Caco-2 (cell line): ENCODE measurements at regions of chr7 and their contacts with region 1.

Region 1: GRCh38 chr7:16918288-16918895 is 36.6 kb upstream of the AGR3 start:
- DNase-seq: peak in 1 of 2 experiments; percentile 52
- H3K4me3 ChIP-seq: no peak overlapping the region
- H3K4me3 Mint-ChIP-seq: no peak overlapping the region
- H3K27ac Mint-ChIP-seq: peak overlapping the region; percentile 50
- H3K4me1 ChIP-seq: peaks cover 51% of the 10 kb centered on the region
- H3K4me1 Mint-ChIP-seq: peaks cover 38% of the 10 kb centered on the region
- H3K27me3 ChIP-seq: no peaks in the 10 kb centered on the region
- H3K27me3 Mint-ChIP-seq: no peaks in the 10 kb centered on the region
- CTCF ChIP-seq: peak; percentile 58 to 82

Region 2: GRCh38 chr7:16695621-16696237 is 222.7 kb before region 1 on chr7:
- CTCF ChIA-PET with region 1: interaction called, 5 read pairs
- POLR2A ChIA-PET with region 1: no interaction called
- intact Hi-C with region 1: loop called (anchors 2 kb)
- DNase-seq: peak; percentile 54 to 67
- H3K4me3 ChIP-seq: no peak overlapping the region
- H3K4me3 Mint-ChIP-seq: no peak overlapping the region
- H3K27ac Mint-ChIP-seq: no peak overlapping the region
- H3K4me1 ChIP-seq: no peaks in the 10 kb centered on the region
- H3K4me1 Mint-ChIP-seq: no peaks in the 10 kb centered on the region
- H3K27me3 ChIP-seq: no peaks in the 10 kb centered on the region
- H3K27me3 Mint-ChIP-seq: no peaks in the 10 kb centered on the region
- CTCF ChIP-seq: peak; percentile 68 to 71

Region 3: GRCh38 chr7:16801111-16801542 is 117.3 kb before region 1 on chr7:
- CTCF ChIA-PET with region 1: interaction called, 23 read pairs
- POLR2A ChIA-PET with region 1: no interaction called
- intact Hi-C with region 1: loop called (anchors 1 kb)
- DNase-seq: peak in 1 of 2 experiments; percentile 44
- H3K4me3 ChIP-seq: no peak overlapping the region
- H3K4me3 Mint-ChIP-seq: peak overlapping the region; percentile 20
- H3K27ac Mint-ChIP-seq: peak overlapping the region; percentile 13
- H3K4me1 ChIP-seq: peaks cover 29% of the 10 kb centered on the region
- H3K4me1 Mint-ChIP-seq: peaks cover 16% of the 10 kb centered on the region
- H3K27me3 ChIP-seq: no peaks in the 10 kb centered on the region
- H3K27me3 Mint-ChIP-seq: no peaks in the 10 kb centered on the region
- CTCF ChIP-seq: peak in 1 of 2 experiments; percentile 54

Region 4: DNA sequence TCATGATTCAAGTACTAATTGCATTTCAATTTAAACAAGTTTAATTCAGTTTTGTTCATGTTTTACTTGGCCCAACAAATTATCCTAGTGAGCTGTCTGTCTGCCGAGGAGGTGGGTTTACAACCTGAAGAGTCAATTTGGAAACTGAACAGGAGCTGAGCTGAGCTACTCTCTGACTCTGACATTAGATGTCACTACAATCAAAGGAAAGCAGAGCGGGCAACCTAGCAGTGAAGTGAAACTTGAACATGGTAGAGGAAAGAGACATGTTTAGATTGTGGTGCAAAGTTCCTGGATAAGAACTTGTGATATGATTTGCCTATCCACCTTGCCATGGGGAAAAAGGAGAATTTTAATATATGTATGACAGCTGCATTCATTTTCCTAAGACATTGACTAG is 27.1 kb before region 1 on chr7:
- CTCF ChIA-PET with region 1: interaction called, 20 read pairs
- POLR2A ChIA-PET with region 1: no interaction called
- intact Hi-C with region 1: loop called (anchors 1 kb)
- DNase-seq: peak; percentile 64 to 74
- H3K4me3 ChIP-seq: no peak overlapping the region
- H3K4me3 Mint-ChIP-seq: no peak overlapping the region
- H3K27ac Mint-ChIP-seq: peak overlapping the region; percentile 35
- H3K4me1 ChIP-seq: peaks cover 31% of the 10 kb centered on the region
- H3K4me1 Mint-ChIP-seq: peaks cover 14% of the 10 kb centered on the region
- H3K27me3 ChIP-seq: no peaks in the 10 kb centered on the region
- H3K27me3 Mint-ChIP-seq: no peaks in the 10 kb centered on the region
- CTCF ChIP-seq: peak; percentile 46 to 75

Region 5: GRCh38 chr7:16905300-16906044 is 12.9 kb before region 1 on chr7:
- CTCF ChIA-PET with region 1: no interaction called
- POLR2A ChIA-PET with region 1: no interaction called
- intact Hi-C with region 1: loop called (anchors 1 kb)
- DNase-seq: peak; percentile 57 to 59
- H3K4me3 ChIP-seq: no peak overlapping the region
- H3K4me3 Mint-ChIP-seq: peak overlapping the region; percentile 43
- H3K27ac Mint-ChIP-seq: peak overlapping the region; percentile 16
- H3K4me1 ChIP-seq: peaks cover 21% of the 10 kb centered on the region
- H3K4me1 Mint-ChIP-seq: peaks cover 35% of the 10 kb centered on the region
- H3K27me3 ChIP-seq: no peaks in the 10 kb centered on the region
- H3K27me3 Mint-ChIP-seq: no peaks in the 10 kb centered on the region
- CTCF ChIP-seq: no peak

Region 6: GRCh38 chr7:16939161-16939560 is 20.8 kb after region 1 on chr7:
- CTCF ChIA-PET with region 1: no interaction called
- POLR2A ChIA-PET with region 1: no interaction called
- intact Hi-C with region 1: loop called (anchors 2 kb)
- DNase-seq: no peak
- H3K4me3 ChIP-seq: no peak overlapping the region
- H3K4me3 Mint-ChIP-seq: no peak overlapping the region
- H3K27ac Mint-ChIP-seq: no peak overlapping the region
- H3K4me1 ChIP-seq: peaks cover 5% of the 10 kb centered on the region; the same call in 1 of the 2 replicates
- H3K4me1 Mint-ChIP-seq: peaks cover 14% of the 10 kb centered on the region
- H3K27me3 ChIP-seq: no peaks in the 10 kb centered on the region
- H3K27me3 Mint-ChIP-seq: no peaks in the 10 kb centered on the region
- CTCF ChIP-seq: no peak

Region 7: DNA sequence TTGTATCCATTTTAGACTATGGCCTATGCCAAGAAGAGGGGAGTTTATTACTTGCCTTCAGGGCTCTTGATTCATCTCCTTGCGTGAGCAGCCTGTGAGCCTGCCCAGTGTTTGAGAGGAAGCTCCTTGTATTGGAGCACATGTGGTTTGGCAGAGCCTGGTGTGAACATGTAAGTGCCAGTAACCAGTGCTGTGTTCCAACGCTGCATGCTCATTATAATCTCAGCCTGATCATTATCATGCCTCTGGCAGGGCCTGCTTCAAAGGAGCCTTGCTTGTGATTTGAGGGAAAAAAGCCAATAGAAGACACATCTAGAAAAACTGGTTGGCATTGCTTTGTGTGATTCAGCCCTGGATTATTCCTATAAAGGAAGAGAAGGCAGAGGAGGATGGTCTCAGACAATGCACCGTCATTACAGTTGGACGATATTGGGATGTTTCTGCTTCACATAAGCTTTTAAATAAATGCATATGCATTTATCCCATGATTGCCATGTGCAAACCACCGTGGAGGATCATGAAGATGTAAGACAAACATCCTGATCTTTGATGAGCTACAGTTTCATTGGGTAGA is 176.7 kb after region 1 on chr7:
- CTCF ChIA-PET with region 1: no interaction called
- POLR2A ChIA-PET with region 1: no interaction called
- intact Hi-C with region 1: no loop called
- DNase-seq: no peak
- H3K4me3 ChIP-seq: no peak overlapping the region
- H3K4me3 Mint-ChIP-seq: no peak overlapping the region
- H3K27ac Mint-ChIP-seq: no peak overlapping the region
- H3K4me1 ChIP-seq: no peaks in the 10 kb centered on the region
- H3K4me1 Mint-ChIP-seq: peaks cover 6% of the 10 kb centered on the region
- H3K27me3 ChIP-seq: no peaks in the 10 kb centered on the region
- H3K27me3 Mint-ChIP-seq: no peaks in the 10 kb centered on the region
- CTCF ChIP-seq: no peak